GM10248 (cell line): ENCODE measurements at regions of chr1 and their contacts with region 1.

Region 1: DNA sequence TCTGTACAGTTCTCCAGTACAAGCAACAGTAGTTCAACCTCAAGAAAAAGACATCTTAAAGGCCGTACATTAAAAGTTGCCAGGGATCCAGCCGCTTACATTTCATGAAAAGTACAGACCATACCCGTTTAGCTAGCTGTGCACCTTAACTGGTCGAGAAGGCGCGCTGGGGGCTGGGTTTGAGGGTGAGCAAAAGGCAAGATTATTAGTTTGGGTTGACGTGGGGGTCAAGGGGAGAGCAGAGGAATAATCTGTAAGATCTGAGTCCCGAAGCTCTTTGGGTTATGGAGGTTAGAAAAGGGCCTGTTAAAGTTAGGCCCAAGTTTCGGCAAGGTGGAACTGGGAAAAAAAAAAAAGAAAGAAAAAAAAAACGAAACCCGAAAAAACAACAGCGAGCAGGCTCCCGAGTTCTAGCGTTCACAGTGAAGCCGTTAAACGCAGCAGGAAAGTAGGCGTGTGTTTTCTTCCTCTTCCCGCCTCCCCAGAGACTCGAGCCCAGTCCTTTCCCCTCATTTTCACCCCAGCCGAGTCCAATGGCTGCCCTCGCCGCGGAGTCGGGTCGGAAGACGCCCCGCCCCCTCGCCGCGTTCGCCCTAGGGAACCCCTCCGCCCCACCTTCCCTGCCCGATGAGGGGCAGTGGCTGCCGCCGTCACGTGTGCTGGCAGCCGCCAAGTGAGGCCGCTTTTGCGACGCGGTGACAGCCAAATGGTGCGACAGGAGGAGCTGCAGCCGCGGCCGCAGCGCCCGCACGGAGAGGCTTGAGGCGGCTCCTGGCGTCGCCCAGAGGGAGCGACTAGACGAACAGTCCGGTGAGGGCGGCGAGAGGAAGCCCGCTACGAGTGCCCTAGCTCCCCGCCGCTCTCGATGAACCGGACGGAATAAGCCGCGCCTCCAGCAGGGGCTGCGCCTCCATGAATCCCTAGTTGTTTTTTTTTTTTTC is at the start of gene PKN2:
- DNase-seq: peak; percentile 96
- CTCF ChIP-seq: no peak

Region 2: DNA sequence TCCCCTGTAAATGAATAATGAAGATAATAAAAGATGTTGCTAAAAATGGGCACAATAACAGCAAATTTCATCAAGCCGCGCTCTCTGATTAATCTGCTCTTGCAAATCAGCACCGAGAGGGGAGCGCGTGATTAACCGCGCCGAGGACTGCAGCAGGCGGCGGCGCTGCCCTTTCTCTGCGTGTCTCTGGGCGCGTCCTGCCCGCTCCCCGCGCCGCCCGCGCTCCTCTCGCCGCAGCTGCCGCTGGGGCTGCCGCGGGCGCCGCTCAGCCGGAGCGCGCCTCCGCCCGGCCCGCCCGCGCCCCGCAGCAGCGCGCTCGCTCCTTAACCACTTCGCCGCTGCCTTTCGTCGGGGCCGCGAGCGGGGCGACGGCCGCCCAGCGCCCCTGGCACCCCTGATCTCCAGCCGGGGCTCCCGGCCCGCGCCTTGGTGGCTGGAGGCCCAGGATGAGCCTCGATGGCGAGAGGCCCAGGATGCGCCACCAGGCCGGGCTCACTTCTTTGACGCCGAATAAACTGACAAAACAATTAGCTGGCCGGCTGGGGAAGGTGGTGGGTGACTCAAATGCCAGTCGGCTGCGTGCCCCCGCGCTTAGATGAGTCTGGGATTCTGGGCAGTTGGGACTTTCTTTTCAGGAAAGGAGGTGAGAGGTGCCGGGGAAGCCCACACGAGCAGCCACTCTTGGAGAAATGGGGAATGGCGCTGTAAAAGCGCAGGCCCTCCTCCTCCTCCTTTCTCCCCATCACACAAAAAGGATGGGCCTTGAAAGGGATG is 221.1 kb before region 1 on chr1:
- CTCF ChIA-PET with region 1: no interaction called
- POLR2A ChIA-PET with region 1: no interaction called
- DNase-seq: no peak
- CTCF ChIP-seq: no peak

Region 3: DNA sequence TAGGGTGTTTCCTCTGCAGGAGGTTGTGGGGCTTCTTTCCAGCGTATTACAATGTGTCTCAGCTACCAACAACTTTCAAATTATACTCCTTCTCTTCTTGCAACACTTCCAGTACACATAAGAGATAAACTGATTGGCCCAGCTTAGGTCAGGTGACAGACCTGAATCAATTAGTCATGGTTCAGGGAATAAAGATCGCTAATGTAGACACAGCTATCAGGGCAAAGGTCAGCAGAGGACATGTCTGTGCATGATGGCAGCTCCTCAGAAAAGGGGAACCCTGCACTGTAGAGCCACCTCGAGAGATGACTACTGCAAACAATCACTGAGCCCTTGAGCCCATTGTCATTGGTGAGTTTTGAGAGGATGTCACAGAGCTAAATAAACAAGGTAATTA is 36.6 kb before region 1 on chr1:
- CTCF ChIA-PET with region 1: interaction called, 3 read pairs
- POLR2A ChIA-PET with region 1: interaction called, 11 read pairs
- DNase-seq: no peak
- CTCF ChIP-seq: no peak